Adrenal gland (tissue), 19 donors: ENCODE measurements at regions of chr5 and their contacts with region 1.

Region 1: DNA sequence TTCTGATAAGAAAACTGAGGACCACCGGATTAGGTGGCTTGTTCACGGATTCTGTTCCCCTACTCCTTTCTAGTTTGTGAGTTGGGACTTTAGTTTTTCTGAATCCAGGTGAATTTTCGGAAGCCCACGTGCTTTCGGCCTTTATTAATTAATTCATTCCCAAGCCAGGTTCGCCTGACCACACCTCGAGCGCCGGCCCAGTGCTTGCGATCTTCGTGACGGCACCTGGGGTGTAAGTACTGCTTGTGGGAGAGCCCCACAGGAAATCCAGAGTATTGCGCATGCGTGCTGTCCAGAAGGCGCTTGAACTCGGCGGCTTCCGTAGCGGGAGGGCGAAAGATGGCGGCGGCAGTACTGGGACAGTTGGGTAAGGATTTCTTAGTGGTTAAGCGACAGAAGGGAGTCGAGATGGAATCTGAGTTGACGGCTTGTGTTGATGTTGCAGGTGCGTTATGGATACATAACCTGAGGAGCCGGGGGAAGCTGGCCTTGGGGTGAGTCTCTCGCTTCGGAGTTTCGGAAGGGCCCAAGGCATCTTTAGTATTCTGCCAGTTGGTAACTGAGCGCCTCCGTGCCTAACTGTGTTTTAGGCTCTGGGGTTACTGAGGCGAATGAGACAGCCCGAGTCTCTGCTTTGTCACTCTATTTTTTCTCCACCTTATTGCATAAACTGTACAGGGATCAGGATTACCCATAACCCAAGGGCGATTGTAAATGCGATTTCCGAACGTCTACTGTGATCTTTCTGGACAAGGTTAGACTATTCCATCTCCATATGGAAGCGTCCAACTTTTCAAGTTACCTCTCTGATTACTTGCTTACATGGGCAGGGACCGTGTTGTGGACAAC is at the start of gene MRPL22:
- DNase-seq: peak; percentile 91 to 96 (median 93)
- H3K4me3 ChIP-seq: peak within 1 kb of the TSS in 3 of 4 donors; percentile 69 to 79 (median 71)
- H3K27ac ChIP-seq: peak within 1 kb of the TSS in 4 of 5 donors; percentile 57 to 84 (median 70)
- H3K4me1 ChIP-seq: peaks cover 23 to 34% of the 10 kb centered on the region in 2 donors
- H3K27me3 ChIP-seq: no peaks in the 10 kb centered on the region
- CTCF ChIP-seq: peak in 4 of 6 experiments; percentile 26 to 44 (median 30)
- POLR2A ChIP-seq: peak; percentile 54 to 73
- total RNA-seq, gene MRPL22: 12.6 to 65.2 (median 52.1) TPM

Region 2: DNA sequence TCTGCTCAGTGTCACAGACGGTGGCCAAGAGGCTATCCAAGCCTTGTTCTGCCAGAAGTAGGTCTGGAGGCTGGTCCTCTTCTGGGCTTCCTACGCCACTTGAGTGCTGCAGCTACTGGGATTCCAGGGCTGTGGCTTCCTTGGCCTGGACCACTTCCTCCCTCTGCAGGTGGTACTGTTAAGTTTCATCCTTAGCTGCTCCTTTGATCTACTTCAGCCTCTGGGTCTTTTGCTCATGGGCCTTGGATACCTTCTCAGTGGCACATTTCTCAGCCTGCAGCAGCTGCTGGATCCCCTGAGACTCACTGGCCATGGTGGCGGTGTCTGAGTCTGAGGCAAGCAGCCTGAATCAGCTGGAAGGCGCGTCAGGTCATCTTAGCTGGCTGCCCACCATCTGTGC is 72.3 kb before region 1 on chr5:
- intact Hi-C with region 1: loop called in 1 of 2 experiments (anchors 10 kb)
- DNase-seq: peak in 2 of 7 donors; percentile 20 to 56
- H3K4me3 ChIP-seq: no peak overlapping the region
- H3K27ac ChIP-seq: no peak overlapping the region
- H3K4me1 ChIP-seq: peaks cover 7 to 24% of the 10 kb centered on the region in 2 donors
- H3K27me3 ChIP-seq: no peaks in the 10 kb centered on the region
- CTCF ChIP-seq: peak in 1 of 6 experiments; percentile 13
- POLR2A ChIP-seq: no peak

Region 3: GRCh38 chr5:155147222-155147621 is 206.2 kb after region 1 on chr5:
- intact Hi-C with region 1: loop called in 1 of 2 experiments (anchors 10 kb)
- DNase-seq: no peak
- H3K4me3 ChIP-seq: no peak overlapping the region
- H3K27ac ChIP-seq: no peak overlapping the region
- H3K4me1 ChIP-seq: no peaks in the 10 kb centered on the region
- H3K27me3 ChIP-seq: no peaks in the 10 kb centered on the region
- CTCF ChIP-seq: peak; percentile 19 to 46 (median 34)
- POLR2A ChIP-seq: no peak